Endothelial cell of umbilical vein (primary cell): ENCODE measurements at regions of chr16 and their contacts with region 1.

Region 1: DNA sequence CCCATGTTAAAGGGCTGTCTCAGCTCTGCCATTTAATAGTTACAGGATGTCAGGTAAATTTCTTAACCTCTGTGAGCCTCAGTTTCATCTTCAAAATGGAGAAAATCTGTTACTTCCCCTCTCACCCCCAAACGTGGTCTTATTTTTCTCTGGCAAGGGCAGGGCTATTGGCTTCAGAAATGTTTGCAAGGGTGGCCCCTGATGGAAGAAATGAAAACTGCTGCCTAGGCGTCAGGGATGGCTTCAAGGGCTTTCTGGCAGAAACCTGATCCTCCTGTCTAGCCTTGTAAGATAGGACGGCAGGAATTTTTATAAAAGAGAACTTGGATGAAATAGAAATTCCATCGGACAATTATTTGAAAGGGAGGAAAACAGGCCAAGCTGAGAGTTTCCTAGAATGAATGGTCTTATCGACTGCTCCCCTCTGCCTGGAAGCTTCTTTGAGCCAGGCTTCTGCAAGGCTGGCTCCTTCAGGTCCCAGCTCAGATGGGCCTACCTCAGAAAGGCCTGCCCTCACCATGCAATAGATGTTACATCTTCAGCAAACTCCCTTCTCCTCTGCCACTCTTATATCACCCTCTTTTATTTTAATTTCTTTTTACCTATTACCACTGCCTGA is 43.0 kb upstream of the TANGO6 start:
- DNase-seq: peak; percentile 69
- H3K4me3 ChIP-seq: no peak overlapping the region
- H3K27ac ChIP-seq: no peak overlapping the region
- H3K4me1 ChIP-seq: no peaks in the 10 kb centered on the region
- H3K27me3 ChIP-seq: no peaks in the 10 kb centered on the region
- CTCF ChIP-seq: peak; percentile 35 to 63
- POLR2A ChIP-seq: no peak

Region 2: GRCh38 chr16:68590201-68590994 is 210.0 kb before region 1 on chr16:
- CTCF ChIA-PET with region 1: interaction called, 31 read pairs
- POLR2A ChIA-PET with region 1: no interaction called
- dilution Hi-C with region 1: no loop called
- intact Hi-C with region 1: loop called (anchors 5 kb)
- DNase-seq: peak; percentile 38
- H3K4me3 ChIP-seq: no peak overlapping the region
- H3K27ac ChIP-seq: no peak overlapping the region
- H3K4me1 ChIP-seq: no peaks in the 10 kb centered on the region
- H3K27me3 ChIP-seq: no peaks in the 10 kb centered on the region
- CTCF ChIP-seq: peak; percentile 58 to 79
- POLR2A ChIP-seq: no peak

Region 3: DNA sequence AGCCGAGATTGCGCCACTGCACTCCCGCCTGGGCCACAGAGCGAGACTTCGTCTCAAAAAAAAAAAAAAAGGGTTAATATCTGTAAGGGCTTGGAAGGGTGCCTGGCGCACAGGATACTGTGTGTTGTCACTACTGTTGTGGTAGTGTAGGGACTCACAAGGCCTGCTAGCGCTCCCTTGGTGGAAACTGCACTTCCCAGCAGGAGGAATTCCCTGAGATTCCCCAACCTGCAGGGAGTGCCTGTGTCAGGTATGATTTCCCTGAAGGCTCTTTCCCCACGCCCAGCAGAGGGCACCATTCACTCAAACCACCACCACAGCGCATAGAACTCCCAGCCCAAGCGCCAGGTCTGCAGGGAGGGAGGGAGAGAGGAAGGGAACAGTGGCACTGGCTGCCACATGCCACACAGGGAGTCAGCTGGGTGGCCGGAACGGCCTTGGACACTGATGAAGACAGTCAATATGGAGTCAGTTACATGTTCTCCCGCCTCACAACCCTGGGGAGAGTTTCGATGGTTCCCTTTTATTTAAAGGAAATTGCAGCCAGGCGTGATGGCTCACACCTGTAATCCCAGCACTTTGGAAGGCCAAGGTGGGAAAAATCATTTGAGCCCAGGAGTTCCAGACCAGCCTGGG is 96.0 kb before region 1 on chr16:
- CTCF ChIA-PET with region 1: no interaction called
- POLR2A ChIA-PET with region 1: no interaction called
- dilution Hi-C with region 1: no loop called
- intact Hi-C with region 1: loop called (anchors 1 kb)
- DNase-seq: peak; percentile 52
- H3K4me3 ChIP-seq: no peak overlapping the region
- H3K27ac ChIP-seq: no peak overlapping the region
- H3K4me1 ChIP-seq: peaks cover 3% of the 10 kb centered on the region
- H3K27me3 ChIP-seq: no peaks in the 10 kb centered on the region
- CTCF ChIP-seq: peak; percentile 78 to 85
- POLR2A ChIP-seq: no peak